Activated B cell treated with CpG ODN at 0.5 μM for 24 hours (primary cell): ENCODE measurements at regions of chrX and their contacts with region 1.

Region 1: DNA sequence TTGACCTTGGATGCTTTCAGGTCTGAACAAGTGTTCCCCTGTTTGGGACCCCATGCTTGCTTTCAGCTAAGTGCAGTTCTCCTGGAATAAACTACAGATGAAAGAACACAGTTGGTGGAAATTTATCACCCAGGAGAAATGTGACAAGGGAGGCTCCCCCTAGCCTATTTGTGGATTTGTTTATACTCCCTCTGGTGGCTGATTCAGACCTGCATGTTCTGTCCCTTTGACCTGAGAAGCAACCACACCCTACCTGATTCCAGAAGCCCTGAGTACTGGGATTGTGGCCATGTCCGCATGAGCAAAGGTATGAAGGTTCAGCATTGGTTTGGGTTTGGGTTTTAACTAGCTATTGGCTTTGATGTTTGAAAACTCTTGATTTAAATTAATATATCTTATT is 440.9 kb downstream of the MID1IP1 start:
- DNase-seq: no peak
- ATAC-seq: no peak
- H3K4me3 Mint-ChIP-seq: no peak overlapping the region
- H3K27ac Mint-ChIP-seq: no peak overlapping the region
- H3K4me1 Mint-ChIP-seq: peaks cover 7% of the 10 kb centered on the region
- H3K27me3 Mint-ChIP-seq: peaks cover 2% of the 10 kb centered on the region
- CTCF ChIP-seq: no peak

Region 2: GRCh38 chrX:38754102-38754790 is 487.9 kb before region 1 on chrX:
- CTCF ChIA-PET with region 1: interaction called, 4 read pairs
- POLR2A ChIA-PET with region 1: no interaction called
- intact Hi-C with region 1: loop called (anchors 1 kb)
- DNase-seq: no peak
- ATAC-seq: peak; percentile 58
- H3K4me3 Mint-ChIP-seq: no peak overlapping the region
- H3K27ac Mint-ChIP-seq: no peak overlapping the region
- H3K4me1 Mint-ChIP-seq: no peaks in the 10 kb centered on the region
- H3K27me3 Mint-ChIP-seq: no peaks in the 10 kb centered on the region
- CTCF ChIP-seq: no peak

Region 3: DNA sequence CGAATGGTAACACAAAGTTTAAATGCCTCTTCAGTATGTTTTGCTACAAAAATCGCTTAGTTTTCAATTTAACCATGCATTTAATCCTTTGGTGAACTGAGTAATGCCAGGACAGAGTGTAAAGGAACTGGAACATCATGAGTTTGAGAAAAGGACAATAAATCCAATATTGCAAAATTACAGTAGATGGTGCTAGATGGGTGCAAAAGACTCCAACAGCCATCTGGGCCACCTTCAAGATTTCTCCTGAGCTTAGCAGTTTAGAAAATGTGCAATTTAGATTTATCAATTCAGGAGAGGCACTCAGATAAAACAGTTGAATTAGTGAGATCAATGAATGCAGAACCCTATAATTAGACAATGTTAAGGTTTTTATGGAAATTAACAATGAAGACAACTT is 474.1 kb before region 1 on chrX:
- CTCF ChIA-PET with region 1: interaction called, 7 read pairs
- POLR2A ChIA-PET with region 1: no interaction called
- intact Hi-C with region 1: loop called (anchors 5 kb)
- DNase-seq: no peak
- ATAC-seq: no peak
- H3K4me3 Mint-ChIP-seq: no peak overlapping the region
- H3K27ac Mint-ChIP-seq: no peak overlapping the region
- H3K4me1 Mint-ChIP-seq: no peaks in the 10 kb centered on the region
- H3K27me3 Mint-ChIP-seq: no peaks in the 10 kb centered on the region
- CTCF ChIP-seq: no peak

Region 4: DNA sequence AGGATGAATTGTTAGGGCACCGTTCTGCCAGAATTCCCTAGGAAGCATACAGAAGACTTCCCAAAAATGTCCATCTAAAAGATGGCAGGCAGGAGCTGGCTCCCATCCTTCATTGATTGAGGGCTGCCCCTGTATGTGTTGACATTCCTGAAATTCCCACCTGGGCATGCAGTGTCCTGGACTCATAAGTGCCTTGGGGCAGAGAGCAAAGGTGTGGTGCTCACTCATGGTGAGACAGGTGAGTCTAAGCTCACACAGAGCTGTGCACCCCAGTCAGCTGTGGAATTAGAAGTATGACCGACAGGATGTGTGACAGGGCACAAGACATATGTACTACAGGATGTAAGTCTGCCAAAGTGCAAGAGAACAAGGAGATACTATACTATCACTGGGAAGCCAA is 169.1 kb before region 1 on chrX:
- CTCF ChIA-PET with region 1: no interaction called
- POLR2A ChIA-PET with region 1: no interaction called
- intact Hi-C with region 1: no loop called
- DNase-seq: no peak
- ATAC-seq: no peak
- H3K4me3 Mint-ChIP-seq: no peak overlapping the region
- H3K27ac Mint-ChIP-seq: no peak overlapping the region
- H3K4me1 Mint-ChIP-seq: no peaks in the 10 kb centered on the region
- H3K27me3 Mint-ChIP-seq: no peaks in the 10 kb centered on the region
- CTCF ChIP-seq: no peak

Region 5: DNA sequence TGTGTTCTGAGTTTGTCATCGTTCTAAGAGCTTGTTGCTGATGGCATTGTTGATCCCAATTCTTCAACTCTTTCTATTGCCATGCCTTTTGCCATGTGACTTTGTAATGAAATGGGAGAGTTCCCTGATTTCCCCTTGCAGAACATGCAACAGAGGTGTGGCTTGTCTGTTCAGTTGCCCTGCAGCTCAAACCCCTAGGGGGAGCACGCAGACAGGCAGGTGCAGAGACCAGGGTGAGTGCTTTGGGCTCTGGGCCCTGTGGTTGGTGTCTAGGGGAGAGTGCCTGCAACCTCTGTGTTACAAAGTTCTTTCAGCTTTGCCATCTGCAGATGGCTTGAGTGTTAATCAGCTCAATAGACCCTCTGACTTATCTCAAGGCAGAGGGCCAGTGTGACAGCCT is 108.2 kb before region 1 on chrX:
- CTCF ChIA-PET with region 1: interaction called, 5 read pairs
- POLR2A ChIA-PET with region 1: no interaction called
- intact Hi-C with region 1: loop called (anchors 1 kb)
- DNase-seq: peak; percentile 27
- ATAC-seq: peak; percentile 96
- H3K4me3 Mint-ChIP-seq: no peak overlapping the region
- H3K27ac Mint-ChIP-seq: peak overlapping the region; percentile 30
- H3K4me1 Mint-ChIP-seq: peaks cover 39% of the 10 kb centered on the region
- H3K27me3 Mint-ChIP-seq: no peaks in the 10 kb centered on the region
- CTCF ChIP-seq: no peak